Activated T-helper 1 cell treated with anti-CD3 and anti-CD28 coated beads, Interleukin-12 subunit alpha, Interleukin-12 subunit beta, Interleukin-2, Interleukin-4 antibody, amounts not matched to agents 30 ng/mL and 10 ng/mL and 1 ng/mL, durations not matched to agents 14 hours and 24 hours and 36 hours (primary cell): ENCODE measurements at regions of chr18 and their contacts with region 1.

Region 1: GRCh38 chr18:63422087-63422809 is at the start of gene VPS4B:
- DNase-seq: peak; percentile 100
- H3K4me3 Mint-ChIP-seq: peak within 1 kb of the TSS; percentile 91
- H3K27ac Mint-ChIP-seq: peak within 1 kb of the TSS; percentile 92
- H3K4me1 Mint-ChIP-seq: peaks cover 18% of the 10 kb centered on the region
- H3K27me3 Mint-ChIP-seq: no peaks in the 10 kb centered on the region
- total RNA-seq, gene VPS4B: 58.6 and 60.7 TPM in 2 replicates

Region 2: DNA sequence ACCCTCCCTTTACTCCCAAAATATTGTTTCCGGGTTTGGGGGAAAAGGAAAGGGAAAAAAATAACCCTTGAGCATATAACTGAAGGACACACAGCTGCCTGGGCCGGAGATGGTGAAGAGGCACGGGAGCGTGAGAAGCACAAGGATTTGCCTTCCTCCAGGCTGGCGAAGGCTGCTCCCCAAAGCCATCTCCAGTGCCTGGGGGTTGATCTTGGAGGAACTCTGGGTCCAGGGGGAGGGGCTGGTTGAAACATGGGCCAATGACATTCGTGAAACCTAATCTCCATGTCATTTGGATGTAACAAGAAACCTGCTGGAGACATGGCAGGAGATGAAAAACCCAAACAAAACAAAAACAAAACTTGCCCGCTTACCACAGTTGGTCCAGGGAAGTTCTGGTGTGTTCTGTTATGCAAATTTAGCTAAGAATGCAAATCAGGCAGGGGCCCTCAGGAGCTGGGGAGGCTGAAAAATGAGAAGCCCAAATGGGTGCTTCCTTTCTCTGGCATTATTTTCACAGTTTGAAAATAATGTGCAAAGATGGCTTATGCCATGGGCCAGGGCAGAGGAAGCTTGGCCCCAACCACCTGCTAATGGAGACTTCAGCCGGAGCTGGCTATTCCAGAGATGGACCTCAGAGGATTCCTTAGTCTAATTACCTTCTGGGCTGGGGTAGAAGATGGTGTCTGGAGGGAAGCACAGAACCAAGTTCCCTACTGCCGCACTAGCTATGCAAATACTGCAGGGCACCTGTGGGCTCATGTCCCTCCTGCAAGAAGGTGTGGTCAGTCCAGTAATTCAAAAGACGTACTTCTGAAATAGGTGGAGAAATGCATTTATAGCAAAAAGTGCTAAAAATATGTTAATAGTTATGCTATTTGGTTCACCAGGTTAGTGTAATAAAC is 283.6 kb before region 1 on chr18:
- intact Hi-C with region 1: loop called (anchors 1 kb)
- DNase-seq: no peak
- H3K4me3 Mint-ChIP-seq: peak overlapping the region; percentile 73
- H3K27ac Mint-ChIP-seq: peak overlapping the region; percentile 90
- H3K4me1 Mint-ChIP-seq: peaks cover 71% of the 10 kb centered on the region
- H3K27me3 Mint-ChIP-seq: no peaks in the 10 kb centered on the region

Region 3: DNA sequence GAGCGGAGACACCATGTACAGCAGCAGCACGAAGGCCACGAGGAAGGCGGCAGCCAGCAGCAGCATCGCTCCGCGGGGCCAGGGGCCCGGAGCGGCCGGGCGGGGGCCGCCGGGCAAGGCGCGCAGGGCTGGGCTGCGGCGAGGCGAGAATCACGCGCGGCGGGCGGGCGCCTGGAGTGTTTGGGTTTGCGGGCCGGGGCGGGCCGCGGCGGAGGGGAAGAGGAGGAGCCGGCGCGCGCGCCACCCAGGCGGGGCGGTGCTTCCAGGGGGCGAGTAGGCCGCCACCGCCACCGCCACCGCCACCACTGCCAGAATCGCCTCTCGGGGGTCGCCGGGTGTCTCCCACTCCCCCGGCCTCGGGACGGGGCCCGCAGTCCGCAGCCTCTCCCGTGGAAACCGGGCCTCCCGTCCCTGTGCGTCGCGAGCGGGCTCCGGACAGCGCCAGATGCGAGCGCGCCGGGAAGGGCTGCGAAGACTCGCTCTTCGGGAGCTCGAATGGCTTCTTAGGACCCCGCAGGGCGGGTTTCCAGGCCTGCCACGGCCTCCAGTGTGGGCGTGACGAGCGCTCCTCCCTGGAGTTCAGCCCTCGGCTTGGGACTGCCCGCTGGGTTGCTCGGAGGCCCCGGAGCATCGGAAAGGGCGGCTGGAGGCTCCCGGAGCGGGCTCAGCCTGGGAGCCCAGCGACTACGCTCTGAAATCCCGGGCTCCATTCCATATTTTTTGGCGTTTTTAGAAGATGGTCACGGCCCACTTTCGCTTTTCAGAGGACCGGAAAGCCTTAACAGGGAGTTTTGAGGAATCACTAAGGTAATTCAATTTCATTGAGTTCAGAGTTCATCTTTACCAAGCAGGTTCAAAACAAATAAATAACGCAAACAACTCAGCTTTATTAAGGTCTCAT is 54.9 kb before region 1 on chr18 and contains the start of gene KDSR:
- intact Hi-C with region 1: loop called (anchors 1 kb)
- DNase-seq: peak; percentile 82
- H3K4me3 Mint-ChIP-seq: peak within 1 kb of the TSS; percentile 93
- H3K27ac Mint-ChIP-seq: peak within 1 kb of the TSS; percentile 83
- H3K4me1 Mint-ChIP-seq: peaks cover 44% of the 10 kb centered on the region
- H3K27me3 Mint-ChIP-seq: no peaks in the 10 kb centered on the region
- total RNA-seq, gene KDSR: 72.2 and 83.5 TPM in 2 replicates

Region 4: DNA sequence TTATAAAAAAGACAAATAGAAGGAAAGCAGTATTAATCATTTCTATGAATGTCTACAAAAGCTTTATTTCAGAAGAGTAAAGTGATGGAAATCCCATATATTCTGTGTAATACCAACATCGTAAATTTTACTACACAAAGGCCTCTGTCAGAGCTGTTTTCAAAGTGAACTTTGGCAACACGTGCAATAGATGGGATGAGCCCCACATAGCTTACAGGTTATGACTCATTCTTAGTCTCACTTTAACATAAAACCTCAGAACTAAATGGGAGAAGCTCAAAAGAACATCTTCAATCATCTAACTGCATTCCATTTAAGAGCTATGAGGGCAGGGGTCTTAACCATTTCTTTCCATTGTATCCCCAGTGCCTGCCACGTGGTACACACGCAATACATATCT is 11.5 kb before region 1 on chr18:
- intact Hi-C with region 1: loop called (anchors 1 kb)
- DNase-seq: no peak
- H3K4me3 Mint-ChIP-seq: no peak overlapping the region
- H3K27ac Mint-ChIP-seq: peak overlapping the region; percentile 24
- H3K4me1 Mint-ChIP-seq: peaks cover 44% of the 10 kb centered on the region
- H3K27me3 Mint-ChIP-seq: no peaks in the 10 kb centered on the region

Region 5: DNA sequence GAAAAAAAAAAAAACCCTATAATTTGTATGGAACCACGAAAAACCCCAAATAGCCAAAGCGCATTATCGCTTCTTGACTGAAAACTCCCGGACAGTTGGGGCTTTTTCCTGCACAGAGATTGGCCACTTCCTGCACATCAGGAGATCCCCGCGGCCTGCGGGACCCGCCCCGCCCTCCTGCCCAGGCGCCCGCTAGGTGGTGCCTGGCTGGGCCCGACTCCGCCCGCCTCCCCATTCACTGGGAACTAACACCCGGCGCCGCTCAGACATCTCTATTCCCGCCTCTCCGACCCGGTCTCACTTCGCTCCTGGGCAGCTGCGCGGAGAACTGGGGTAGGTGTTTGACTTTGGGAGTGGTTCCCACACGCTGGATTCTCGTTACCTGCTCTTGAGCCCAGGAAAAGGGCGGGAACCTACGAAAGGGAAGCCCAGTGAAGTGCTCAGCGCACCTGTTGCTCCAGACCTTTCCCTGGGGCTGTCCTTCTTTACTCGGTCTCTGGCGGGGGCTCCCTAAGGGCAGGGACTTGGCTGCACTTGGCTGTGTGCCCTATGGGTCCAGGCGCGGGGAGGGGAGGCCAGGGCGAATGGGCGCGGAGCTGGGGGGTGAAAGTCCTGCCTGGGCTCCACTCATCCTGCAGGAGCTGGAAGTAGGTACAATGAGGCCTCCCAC is 527.0 kb after region 1 on chr18 and contains the start of gene HMSD:
- intact Hi-C with region 1: loop called (anchors 10 kb)
- DNase-seq: peak; percentile 68
- H3K4me3 Mint-ChIP-seq: peak within 1 kb of the TSS; percentile 88
- H3K27ac Mint-ChIP-seq: peak within 1 kb of the TSS; percentile 87
- H3K4me1 Mint-ChIP-seq: peaks cover 46% of the 10 kb centered on the region
- H3K27me3 Mint-ChIP-seq: peaks cover 5% of the 10 kb centered on the region
- total RNA-seq, gene HMSD: 19.7 and 27.8 TPM in 2 replicates